Ovary (tissue), 10 donors: ENCODE measurements at regions of chr2 and their contacts with region 1.

Region 1: GRCh38 chr2:156005999-156006712 is 326.4 kb downstream of the NR4A2 start:
- DNase-seq: no peak
- H3K4me3 ChIP-seq: no peak overlapping the region
- H3K27ac ChIP-seq: no peak overlapping the region
- H3K4me1 ChIP-seq: no peaks in the 10 kb centered on the region
- H3K27me3 ChIP-seq: no peaks in the 10 kb centered on the region
- CTCF ChIP-seq: no peak
- EP300 ChIP-seq: no peak
- POLR2A ChIP-seq: no peak

Region 2: DNA sequence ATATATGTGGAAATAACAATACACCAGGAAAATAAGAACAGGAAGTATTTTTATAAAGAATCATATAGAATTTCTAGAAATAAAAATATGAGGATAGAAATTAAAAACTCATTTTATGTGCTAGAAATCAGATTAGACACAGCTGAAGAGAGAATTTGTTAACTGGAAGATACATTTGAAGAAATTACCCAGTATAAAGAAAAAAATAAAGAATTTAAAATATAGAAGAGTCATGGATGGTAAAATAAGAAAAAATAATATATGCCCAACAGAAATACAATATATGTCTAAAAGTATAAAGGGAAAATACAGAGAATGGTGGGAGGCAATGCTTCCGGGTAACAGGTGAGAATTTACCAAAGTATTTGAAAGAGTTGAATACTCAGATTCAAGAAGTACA is 213.5 kb before region 1 on chr2:
- intact Hi-C with region 1: no loop called
- DNase-seq: no peak
- H3K4me3 ChIP-seq: no peak overlapping the region
- H3K27ac ChIP-seq: no peak overlapping the region
- H3K4me1 ChIP-seq: no peaks in the 10 kb centered on the region
- H3K27me3 ChIP-seq: no peaks in the 10 kb centered on the region
- CTCF ChIP-seq: no peak
- EP300 ChIP-seq: no peak
- POLR2A ChIP-seq: no peak

Region 3: DNA sequence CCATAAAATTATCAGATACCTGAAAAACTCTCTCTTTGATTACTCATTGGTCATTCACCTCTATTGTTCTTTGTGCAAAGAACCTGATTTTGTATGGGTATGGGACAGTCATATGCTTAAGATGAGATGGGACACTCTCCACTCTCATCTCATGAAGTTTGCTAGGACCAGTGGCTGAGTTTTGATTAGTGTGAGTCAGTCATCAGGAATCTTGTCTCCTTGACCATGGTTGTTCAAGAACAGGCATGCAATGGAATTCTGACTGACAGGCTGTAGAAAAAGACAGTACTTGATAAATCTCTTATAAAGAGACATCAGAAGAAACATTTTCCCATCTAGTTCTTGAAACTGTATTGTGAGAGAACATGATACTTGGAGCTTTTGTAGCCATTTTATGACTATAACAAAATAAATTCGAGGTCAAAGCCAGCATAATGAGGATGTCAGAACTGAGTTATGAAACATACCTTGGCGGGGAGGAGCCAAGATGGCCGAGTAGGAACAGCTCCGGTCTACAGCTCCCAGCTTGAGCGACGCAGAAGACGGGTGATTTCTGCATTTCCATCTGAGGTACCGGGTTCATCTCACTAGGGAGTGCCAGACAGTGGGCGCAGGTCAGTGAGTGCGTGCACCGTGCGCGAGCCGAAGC is 40.6 kb before region 1 on chr2:
- intact Hi-C with region 1: no loop called
- DNase-seq: no peak
- H3K4me3 ChIP-seq: no peak overlapping the region
- H3K27ac ChIP-seq: no peak overlapping the region
- H3K4me1 ChIP-seq: no peaks in the 10 kb centered on the region
- H3K27me3 ChIP-seq: no peaks in the 10 kb centered on the region
- CTCF ChIP-seq: no peak
- EP300 ChIP-seq: no peak
- POLR2A ChIP-seq: no peak

Region 4: GRCh38 chr2:156294945-156295580 is 288.9 kb after region 1 on chr2:
- intact Hi-C with region 1: no loop called
- DNase-seq: no peak
- H3K4me3 ChIP-seq: no peak overlapping the region
- H3K27ac ChIP-seq: no peak overlapping the region
- H3K4me1 ChIP-seq: no peaks in the 10 kb centered on the region
- H3K27me3 ChIP-seq: no peaks in the 10 kb centered on the region
- CTCF ChIP-seq: no peak
- EP300 ChIP-seq: no peak
- POLR2A ChIP-seq: no peak

Region 5: DNA sequence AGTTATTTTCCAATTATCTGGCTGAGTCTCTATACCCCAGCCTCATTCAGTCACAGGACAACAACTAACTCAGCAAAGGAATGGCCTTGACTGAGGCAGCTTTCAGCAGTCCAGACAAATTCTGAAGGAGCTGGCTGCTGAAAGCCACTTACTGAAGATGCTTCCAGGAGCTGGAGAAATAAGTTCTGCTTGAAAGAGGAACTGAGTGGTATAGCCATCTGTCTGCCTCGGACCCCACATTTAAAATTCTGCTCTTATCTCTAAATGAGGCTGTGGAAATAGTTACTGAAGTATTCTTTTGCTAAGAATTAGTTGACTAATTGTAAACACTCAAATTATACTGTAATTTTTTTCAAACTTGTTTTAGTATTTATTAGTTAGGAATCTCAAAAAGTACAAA is 420.9 kb after region 1 on chr2:
- intact Hi-C with region 1: loop called in 1 of 4 experiments (anchors 5 kb)
- DNase-seq: no peak
- H3K4me3 ChIP-seq: no peak overlapping the region
- H3K27ac ChIP-seq: peak overlapping the region in 1 of 2 donors; percentile 6
- H3K4me1 ChIP-seq: no peaks in the 10 kb centered on the region
- H3K27me3 ChIP-seq: no peaks in the 10 kb centered on the region
- CTCF ChIP-seq: no peak
- EP300 ChIP-seq: no peak
- POLR2A ChIP-seq: no peak